Activated CD8-positive, alpha-beta memory T cell treated with anti-CD3 and anti-CD28 coated beads, Interleukin-2, amount 10 ng/mL, durations not matched to agents 7 days and 5 days (primary cell): ENCODE measurements at regions of chr11 and their contacts with region 1.

Region 1: GRCh38 chr11:122655527-122656072 is at the start of gene UBASH3B:
- DNase-seq: peak; percentile 82
- ATAC-seq: peak; percentile 82
- H3K4me3 Mint-ChIP-seq: peak within 1 kb of the TSS; percentile 94
- H3K27ac Mint-ChIP-seq: peak within 1 kb of the TSS; percentile 88
- H3K4me1 Mint-ChIP-seq: peaks cover 27% of the 10 kb centered on the region
- H3K27me3 Mint-ChIP-seq: peaks cover 40% of the 10 kb centered on the region
- total RNA-seq, gene UBASH3B: 67.3 to 108 TPM

Region 2: GRCh38 chr11:122628810-122629555 is 26.6 kb before region 1 on chr11:
- CTCF ChIA-PET with region 1: interaction called, 14 read pairs
- DNase-seq: peak; percentile 81
- ATAC-seq: peak; percentile 88
- H3K4me3 Mint-ChIP-seq: no peak overlapping the region
- H3K27ac Mint-ChIP-seq: no peak overlapping the region
- H3K4me1 Mint-ChIP-seq: peaks cover 15% of the 10 kb centered on the region
- H3K27me3 Mint-ChIP-seq: peaks cover 7% of the 10 kb centered on the region

Region 3: GRCh38 chr11:122668562-122669090 is 13.0 kb after region 1 on chr11:
- CTCF ChIA-PET with region 1: interaction called, 35 read pairs
- DNase-seq: no peak
- ATAC-seq: peak; percentile 73
- H3K4me3 Mint-ChIP-seq: peak overlapping the region; percentile 3
- H3K27ac Mint-ChIP-seq: peak overlapping the region; percentile 83
- H3K4me1 Mint-ChIP-seq: peaks cover 60% of the 10 kb centered on the region
- H3K27me3 Mint-ChIP-seq: no peaks in the 10 kb centered on the region

Region 4: GRCh38 chr11:122673701-122674100 is 18.1 kb after region 1 on chr11:
- CTCF ChIA-PET with region 1: interaction called, 35 read pairs
- DNase-seq: no peak
- ATAC-seq: no peak
- H3K4me3 Mint-ChIP-seq: no peak overlapping the region
- H3K27ac Mint-ChIP-seq: no peak overlapping the region
- H3K4me1 Mint-ChIP-seq: peaks cover 47% of the 10 kb centered on the region
- H3K27me3 Mint-ChIP-seq: no peaks in the 10 kb centered on the region

Region 5: GRCh38 chr11:122697636-122698167 is 42.1 kb after region 1 on chr11:
- CTCF ChIA-PET with region 1: interaction called, 17 read pairs
- DNase-seq: peak; percentile 70
- ATAC-seq: peak; percentile 87
- H3K4me3 Mint-ChIP-seq: peak overlapping the region; percentile 22
- H3K27ac Mint-ChIP-seq: peak overlapping the region; percentile 87
- H3K4me1 Mint-ChIP-seq: peaks cover 62% of the 10 kb centered on the region
- H3K27me3 Mint-ChIP-seq: no peaks in the 10 kb centered on the region

Region 6: DNA sequence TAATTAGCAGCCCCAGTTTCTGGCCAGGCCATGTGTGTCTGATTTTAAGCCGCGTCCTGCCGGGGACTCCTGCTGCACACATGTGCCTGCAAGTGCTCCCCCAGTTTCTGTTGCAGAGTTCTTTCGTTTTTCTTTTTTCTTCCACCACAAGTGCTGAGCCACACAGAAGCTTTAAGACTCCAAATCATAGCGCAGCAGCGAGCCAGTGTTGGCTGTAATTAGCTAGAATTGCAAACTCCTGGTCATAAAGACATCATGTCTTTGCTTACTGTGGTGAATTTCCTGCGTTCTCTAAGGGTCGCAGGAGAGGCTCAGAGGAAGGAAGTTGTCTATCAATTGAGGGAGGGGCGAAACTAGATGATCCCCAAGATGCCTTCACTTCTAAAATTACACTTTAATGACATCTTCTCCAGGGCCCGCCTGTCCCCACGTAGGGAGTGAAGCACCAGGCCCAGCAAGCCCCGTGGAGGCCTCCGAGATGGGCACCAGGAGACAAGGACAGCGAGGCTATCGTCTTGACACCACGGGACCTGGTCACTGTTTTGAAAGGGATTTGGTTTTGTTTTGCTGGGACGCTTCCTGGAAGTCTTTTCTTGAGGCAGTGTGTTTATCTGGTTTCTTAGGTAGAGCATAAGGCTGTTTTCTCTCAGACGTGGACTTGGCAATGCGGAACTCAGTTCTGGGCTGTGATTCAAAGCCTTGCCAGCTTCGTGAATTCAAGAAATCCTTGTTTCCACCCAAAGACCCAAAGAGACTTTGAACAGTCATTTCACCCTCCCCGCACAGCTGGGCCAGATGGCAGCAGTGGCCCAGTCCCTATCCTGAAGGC is 71.7 kb after region 1 on chr11:
- CTCF ChIA-PET with region 1: interaction called, 12 read pairs
- DNase-seq: peak; percentile 76
- ATAC-seq: peak; percentile 77
- H3K4me3 Mint-ChIP-seq: peak overlapping the region; percentile 65
- H3K27ac Mint-ChIP-seq: peak overlapping the region; percentile 96
- H3K4me1 Mint-ChIP-seq: peaks cover 82% of the 10 kb centered on the region
- H3K27me3 Mint-ChIP-seq: no peaks in the 10 kb centered on the region

Region 7: GRCh38 chr11:122749005-122749687 is 93.5 kb after region 1 on chr11:
- CTCF ChIA-PET with region 1: interaction called, 288 read pairs
- DNase-seq: peak; percentile 90
- ATAC-seq: peak; percentile 86
- H3K4me3 Mint-ChIP-seq: no peak overlapping the region
- H3K27ac Mint-ChIP-seq: no peak overlapping the region
- H3K4me1 Mint-ChIP-seq: peaks cover 17% of the 10 kb centered on the region
- H3K27me3 Mint-ChIP-seq: no peaks in the 10 kb centered on the region

Region 8: DNA sequence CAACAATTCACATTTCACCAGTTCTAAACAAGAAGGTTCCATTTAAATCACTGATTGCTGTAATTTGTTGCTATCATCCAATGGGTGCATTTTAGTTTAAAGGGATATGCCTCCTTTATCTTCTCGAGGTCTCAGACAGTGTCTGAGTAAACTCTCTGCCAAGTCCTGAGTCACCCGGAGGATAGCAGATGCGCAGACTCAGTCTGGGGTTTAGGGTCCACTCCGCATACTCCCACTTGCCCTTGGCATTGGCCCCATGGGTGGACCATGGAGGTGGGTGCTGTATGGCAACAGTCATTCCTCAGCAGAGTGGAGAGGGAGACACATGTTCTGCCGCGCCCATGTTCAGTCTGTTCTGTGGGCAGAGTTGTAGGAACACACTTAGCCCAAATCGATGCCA is 117.3 kb after region 1 on chr11:
- CTCF ChIA-PET with region 1: no interaction called
- DNase-seq: no peak
- ATAC-seq: no peak
- H3K4me3 Mint-ChIP-seq: no peak overlapping the region
- H3K27ac Mint-ChIP-seq: no peak overlapping the region
- H3K4me1 Mint-ChIP-seq: peaks cover 7% of the 10 kb centered on the region
- H3K27me3 Mint-ChIP-seq: peaks cover 3% of the 10 kb centered on the region